OCI-LY7 (cell line): ENCODE measurements at regions of chr1 and their contacts with region 1.

Region 1: DNA sequence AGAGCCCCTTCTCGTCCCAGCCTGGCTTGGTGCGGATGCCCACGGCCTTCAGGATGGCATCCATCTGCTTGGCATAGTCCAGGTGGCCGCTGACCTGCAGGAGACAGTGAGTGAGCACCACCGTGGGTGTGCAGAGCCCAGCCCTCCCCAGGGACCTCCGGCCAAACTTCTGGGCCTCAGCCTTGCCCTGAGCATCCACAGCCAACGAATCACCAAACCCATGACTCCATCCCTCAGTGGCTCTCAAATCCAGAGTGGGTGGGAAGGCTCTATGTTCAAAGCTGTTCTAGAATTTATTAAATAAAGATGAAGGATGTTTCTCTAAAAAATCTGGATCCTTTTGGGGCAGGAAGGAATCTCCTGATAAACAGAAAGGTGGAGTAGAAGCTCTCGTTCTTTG is 18.7 kb downstream of the HTR6 start:
- DNase-seq: no peak
- H3K4me3 ChIP-seq: no peak overlapping the region
- H3K27ac ChIP-seq: no peak overlapping the region
- H3K4me1 ChIP-seq: no peaks in the 10 kb centered on the region
- CTCF ChIP-seq: no peak

Region 2: GRCh38 chr1:19477284-19478249 is 205.8 kb before region 1 on chr1:
- CTCF ChIA-PET with region 1: no interaction called
- POLR2A ChIA-PET with region 1: interaction called, 10 read pairs
- intact Hi-C with region 1: no loop called
- DNase-seq: peak; percentile 69
- H3K4me3 ChIP-seq: peak overlapping the region; percentile 20
- H3K27ac ChIP-seq: peak overlapping the region; percentile 65
- H3K4me1 ChIP-seq: peaks cover 33% of the 10 kb centered on the region
- CTCF ChIP-seq: no peak